ENCODE measurements at regions of chr7 and their contacts with region 1.

Region 1: DNA sequence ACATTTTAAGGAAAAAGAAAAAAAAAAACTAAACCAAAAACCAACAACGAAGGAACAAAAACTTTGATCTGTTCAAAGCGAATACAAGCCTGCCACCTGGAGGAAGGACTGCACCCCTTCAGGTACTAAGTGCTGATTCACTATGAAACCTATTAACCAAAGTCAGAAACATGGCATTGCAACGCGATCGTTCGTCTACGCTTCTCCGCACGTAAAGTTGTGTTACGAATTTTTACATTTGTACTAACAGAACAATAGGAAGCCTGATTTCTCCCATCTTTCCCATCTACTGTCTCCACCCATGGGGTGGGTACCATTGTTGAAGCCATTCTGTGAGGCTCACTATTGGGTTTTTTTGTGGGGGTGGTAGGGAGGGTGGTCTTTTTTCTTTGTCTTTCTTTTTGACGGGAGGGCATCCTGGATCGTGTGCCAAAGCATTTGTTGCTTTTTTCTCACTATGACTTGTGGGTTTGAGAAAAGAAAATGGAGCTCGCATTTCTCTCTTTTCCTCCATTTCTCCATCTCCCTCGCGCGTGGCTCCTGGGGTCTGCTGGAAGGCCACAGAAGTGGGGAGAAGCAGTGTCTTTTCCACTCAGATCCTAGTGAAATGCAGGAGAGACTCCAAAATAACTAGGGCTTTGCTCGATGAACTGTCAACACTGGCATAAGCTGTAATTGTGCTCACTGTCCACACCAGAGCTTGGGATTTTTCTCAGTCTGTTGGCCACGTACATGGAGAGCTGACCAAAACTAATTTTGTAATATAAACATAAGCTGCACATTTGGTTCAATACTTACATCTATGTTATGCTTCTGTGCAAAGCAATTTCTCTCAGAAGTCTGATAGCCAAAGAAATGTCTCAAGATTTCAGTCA is 100.9 kb upstream of the YAE1 start:
- DNase-seq: peak; percentile 65
- ATAC-seq: peak; percentile 91
- H3K4me3 ChIP-seq: peak overlapping the region; percentile 14; the same call in 1 of the 2 replicates
- H3K27ac ChIP-seq: no peak overlapping the region
- H3K4me1 ChIP-seq: no peaks in the 10 kb centered on the region
- H3K27me3 ChIP-seq: peaks cover 87% of the 10 kb centered on the region
- CTCF ChIP-seq: peak; percentile 89

Region 2: GRCh38 chr7:38398725-38399321 is 1066.5 kb before region 1 on chr7:
- CTCF ChIA-PET with region 1: no interaction called
- POLR2A ChIA-PET with region 1: no interaction called
- intact Hi-C with region 1: loop called (anchors 2 kb)
- DNase-seq: peak; percentile 52
- ATAC-seq: peak; percentile 68
- H3K4me3 ChIP-seq: no peak overlapping the region
- H3K27ac ChIP-seq: no peak overlapping the region
- H3K4me1 ChIP-seq: no peaks in the 10 kb centered on the region
- H3K27me3 ChIP-seq: peaks cover 4% of the 10 kb centered on the region; the same call in 1 of the 2 replicates
- CTCF ChIP-seq: peak; percentile 79

Region 3: GRCh38 chr7:38796626-38797501 is 668.4 kb before region 1 on chr7:
- CTCF ChIA-PET with region 1: no interaction called
- POLR2A ChIA-PET with region 1: no interaction called
- intact Hi-C with region 1: loop called (anchors 1 kb)
- DNase-seq: peak; percentile 77
- ATAC-seq: peak; percentile 53
- H3K4me3 ChIP-seq: no peak overlapping the region
- H3K27ac ChIP-seq: no peak overlapping the region
- H3K4me1 ChIP-seq: no peaks in the 10 kb centered on the region
- H3K27me3 ChIP-seq: no peaks in the 10 kb centered on the region
- CTCF ChIP-seq: peak; percentile 89

Region 4: DNA sequence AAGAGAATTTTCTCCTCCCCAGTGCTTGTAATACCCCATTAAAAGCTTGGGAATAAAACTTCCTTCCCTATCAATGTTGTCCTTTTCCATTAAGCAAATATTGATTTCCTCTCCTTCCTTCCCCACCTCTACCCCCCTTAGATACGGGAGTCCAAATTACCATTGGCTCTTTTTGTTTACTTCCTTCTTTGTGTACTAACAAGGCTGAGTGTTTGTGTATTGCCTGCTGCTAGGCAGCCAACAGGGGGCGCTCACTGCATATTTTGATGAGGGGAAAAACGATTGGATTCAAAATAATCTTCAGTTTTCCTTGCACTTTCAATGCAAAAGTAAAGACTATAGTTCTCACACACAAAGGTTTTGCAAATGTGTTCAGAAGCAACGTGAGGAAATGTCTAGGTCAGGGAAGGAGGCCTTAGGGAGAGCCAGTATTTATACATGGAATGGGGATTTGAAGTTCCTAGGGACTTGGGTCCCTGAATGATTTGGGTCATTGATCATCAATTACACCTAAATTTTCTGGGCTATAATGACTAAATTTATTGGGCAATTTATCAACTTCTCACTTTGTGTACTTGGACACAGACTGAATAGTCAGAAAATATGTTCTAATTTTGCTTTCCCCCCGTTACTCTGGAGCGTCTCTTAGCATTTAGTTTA is 532.7 kb before region 1 on chr7:
- CTCF ChIA-PET with region 1: no interaction called
- POLR2A ChIA-PET with region 1: no interaction called
- intact Hi-C with region 1: loop called (anchors 1 kb)
- DNase-seq: peak; percentile 63
- ATAC-seq: peak; percentile 38; the same call in 1 of the 2 replicates
- H3K4me3 ChIP-seq: no peak overlapping the region
- H3K27ac ChIP-seq: no peak overlapping the region
- H3K4me1 ChIP-seq: no peaks in the 10 kb centered on the region
- H3K27me3 ChIP-seq: peaks cover 17% of the 10 kb centered on the region; the same call in 1 of the 2 replicates
- CTCF ChIP-seq: peak; percentile 95

Region 5: DNA sequence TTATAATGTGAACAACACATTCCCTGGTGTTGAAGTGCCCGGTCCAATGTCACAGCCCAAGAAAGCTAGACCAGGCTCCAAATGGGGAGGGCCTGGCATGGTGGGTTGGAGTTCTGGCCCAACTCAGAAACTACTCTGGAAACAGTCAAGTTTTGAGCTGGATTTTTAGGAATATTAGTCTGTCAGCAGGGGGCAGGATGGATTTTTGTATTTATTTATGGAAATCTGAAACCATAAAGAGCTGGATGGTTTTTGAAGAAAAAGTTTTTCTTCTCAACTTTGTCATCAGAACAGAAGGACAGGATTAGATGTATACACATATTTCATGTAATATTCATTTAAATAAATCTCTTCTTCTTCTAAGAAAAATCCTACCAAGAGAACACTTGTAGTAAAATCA is 390.1 kb before region 1 on chr7:
- CTCF ChIA-PET with region 1: no interaction called
- POLR2A ChIA-PET with region 1: no interaction called
- intact Hi-C with region 1: loop called (anchors 1 kb)
- DNase-seq: peak; percentile 25
- ATAC-seq: no peak
- H3K4me3 ChIP-seq: no peak overlapping the region
- H3K27ac ChIP-seq: no peak overlapping the region
- H3K4me1 ChIP-seq: no peaks in the 10 kb centered on the region
- H3K27me3 ChIP-seq: peaks cover 45% of the 10 kb centered on the region
- CTCF ChIP-seq: peak; percentile 37; the same call in 1 of the 2 replicates

Region 6: DNA sequence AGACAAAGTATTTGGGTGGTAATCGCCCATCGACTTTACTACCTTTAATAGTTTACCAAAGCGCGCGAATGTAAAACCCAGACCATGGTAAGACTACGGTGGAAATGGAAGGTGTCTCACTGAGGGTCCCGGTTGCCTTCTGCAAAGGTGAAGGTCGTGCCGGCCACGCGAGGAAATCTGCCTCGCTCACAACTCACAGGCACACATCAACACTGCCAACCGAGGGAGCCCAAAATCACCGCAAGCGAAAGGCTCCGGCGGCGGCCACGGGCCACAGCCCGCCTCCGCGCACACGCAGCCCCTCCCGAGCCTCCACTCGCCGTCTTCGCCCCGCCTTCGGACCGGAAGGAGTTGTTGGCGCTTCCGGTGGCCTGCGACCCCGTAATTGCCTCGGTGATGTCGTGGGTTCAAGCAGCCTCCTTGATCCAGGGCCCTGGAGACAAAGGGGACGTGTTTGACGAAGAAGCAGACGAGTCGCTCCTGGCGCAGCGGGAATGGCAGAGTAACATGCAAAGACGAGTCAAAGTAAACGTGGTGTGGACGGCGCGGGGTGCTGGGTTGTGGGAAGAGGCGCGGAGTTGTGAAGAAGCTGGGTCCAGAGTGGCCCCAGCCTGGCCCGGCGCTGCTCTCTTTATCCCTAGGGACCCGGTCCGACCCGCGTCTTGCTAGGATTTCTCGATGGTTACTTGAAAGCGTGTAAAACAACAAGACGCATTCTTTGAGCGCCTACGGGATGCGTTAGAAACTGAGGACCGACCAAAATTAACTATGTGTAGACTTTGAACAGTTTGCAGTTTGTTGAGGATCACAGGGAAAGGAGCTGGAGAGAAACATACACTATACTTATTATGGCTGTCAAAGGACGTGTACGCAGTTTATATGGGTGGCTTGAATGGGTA is 101.0 kb after region 1 on chr7 and contains the start of gene YAE1:
- CTCF ChIA-PET with region 1: no interaction called
- POLR2A ChIA-PET with region 1: no interaction called
- intact Hi-C with region 1: no loop called
- DNase-seq: peak; percentile 63
- ATAC-seq: peak; percentile 82
- H3K4me3 ChIP-seq: peak within 1 kb of the TSS; percentile 97
- H3K27ac ChIP-seq: peak within 1 kb of the TSS; percentile 99
- H3K4me1 ChIP-seq: peaks cover 13% of the 10 kb centered on the region
- H3K27me3 ChIP-seq: no peaks in the 10 kb centered on the region
- CTCF ChIP-seq: no peak
- total RNA-seq, gene YAE1: 14.7 and 23.6 TPM in 2 replicates